Heart right ventricle (tissue), 16 donors: ENCODE measurements at regions of chr4 and their contacts with region 1.

Region 1: DNA sequence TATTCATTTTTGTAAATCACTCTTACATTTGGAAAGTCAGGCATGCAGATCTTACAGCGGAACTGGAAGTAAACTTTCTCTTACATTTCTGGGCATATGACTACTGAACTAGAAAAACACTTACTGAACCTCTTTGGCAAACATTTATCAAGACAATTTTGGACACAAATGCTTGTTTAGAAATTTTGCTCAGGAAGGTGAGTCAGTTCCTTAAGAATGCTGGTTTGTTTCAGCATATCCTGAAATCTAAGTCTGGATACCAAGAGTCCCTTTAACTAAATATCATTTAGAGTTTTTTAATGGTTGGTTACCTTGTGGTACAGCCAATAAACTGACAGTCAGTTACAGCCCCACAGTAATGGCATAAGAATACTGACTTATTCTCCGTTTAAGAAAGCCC is 15.0 kb downstream of the SHISA3 start:
- DNase-seq: no peak
- ATAC-seq: peak in 7 of 8 donors; percentile 66 to 86 (median 79)
- H3K4me3 ChIP-seq: no peak overlapping the region
- H3K27ac ChIP-seq: peak overlapping the region in 9 of 10 donors; percentile 4 to 73 (median 52)
- H3K4me1 ChIP-seq: peaks cover 0 to 22% (median 5%) of the 10 kb centered on the region in 9 donors
- H3K27me3 ChIP-seq: no peaks in the 10 kb centered on the region
- CTCF ChIP-seq: no peak

Region 2: GRCh38 chr4:42331914-42332368 is 80.3 kb before region 1 on chr4:
- intact Hi-C with region 1: loop called in 1 of 10 experiments (anchors 5 kb)
- DNase-seq: peak; percentile 23 to 36
- ATAC-seq: peak; percentile 55 to 94 (median 88)
- H3K4me3 ChIP-seq: no peak overlapping the region
- H3K27ac ChIP-seq: peak overlapping the region in 4 of 10 donors; percentile 19 to 61 (median 32)
- H3K4me1 ChIP-seq: peaks cover 0 to 14% (median 0%) of the 10 kb centered on the region in 9 donors
- H3K27me3 ChIP-seq: no peaks in the 10 kb centered on the region
- CTCF ChIP-seq: no peak

Region 3: GRCh38 chr4:42736527-42737195 is 324.4 kb after region 1 on chr4:
- intact Hi-C with region 1: no loop called
- DNase-seq: no peak
- ATAC-seq: no peak
- H3K4me3 ChIP-seq: no peak overlapping the region
- H3K27ac ChIP-seq: no peak overlapping the region
- H3K4me1 ChIP-seq: no peaks in the 10 kb centered on the region
- H3K27me3 ChIP-seq: no peaks in the 10 kb centered on the region
- CTCF ChIP-seq: no peak